IMR-90 (cell line): ENCODE measurements at regions of chr2 and their contacts with region 1.

Region 1: DNA sequence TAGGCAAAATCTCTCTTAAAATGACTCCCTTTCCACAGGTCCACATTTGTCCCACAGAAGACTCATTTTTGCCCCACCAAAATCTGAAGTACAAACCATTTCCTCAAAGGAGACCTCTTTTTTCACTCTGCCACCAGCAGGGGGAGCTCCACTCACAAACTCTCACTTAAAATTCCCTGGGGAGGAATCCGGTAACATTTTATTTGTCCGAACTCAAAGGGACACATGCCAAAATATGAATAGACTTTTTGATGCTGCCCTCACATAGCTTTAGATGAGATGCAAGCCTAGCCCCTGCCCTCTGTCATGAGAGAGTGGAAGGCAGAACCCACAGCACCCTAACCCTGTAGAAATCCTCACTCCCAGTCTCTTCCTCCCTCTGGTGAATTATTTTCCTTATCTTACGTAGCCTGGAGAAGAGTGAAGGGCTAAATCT is 57.1 kb downstream of the RMDN2 start:
- DNase-seq: peak; percentile 58
- ATAC-seq: peak; percentile 29; the same call in 1 of the 2 replicates
- H3K4me3 ChIP-seq: no peak overlapping the region
- H3K27ac ChIP-seq: no peak overlapping the region
- H3K4me1 ChIP-seq: peaks cover 3% of the 10 kb centered on the region; the same call in 1 of the 2 replicates
- H3K27me3 ChIP-seq: no peaks in the 10 kb centered on the region
- CTCF ChIP-seq: peak; percentile 72
- POLR2A ChIP-seq: no peak
- RAD21 ChIP-seq: peak; percentile 65

Region 2: DNA sequence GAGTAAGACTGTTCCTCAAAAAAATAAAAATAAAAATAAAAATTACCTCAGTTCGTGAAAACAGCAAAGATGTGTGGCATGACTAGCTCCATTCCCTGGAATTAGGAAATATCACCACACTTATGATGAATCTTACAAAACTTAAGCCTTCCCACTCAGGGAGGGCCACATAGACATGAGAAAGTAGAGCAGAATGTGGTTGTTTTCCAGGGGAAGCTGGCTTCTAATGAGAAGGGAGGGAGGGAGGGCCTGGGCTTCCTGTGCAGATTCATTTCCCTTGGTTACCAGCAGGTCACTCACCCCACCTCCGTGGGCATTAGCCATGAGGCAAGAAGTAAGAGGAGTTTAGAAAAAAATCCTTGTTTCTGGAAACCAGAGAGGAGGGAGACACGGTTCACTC is 153.0 kb before region 1 on chr2:
- CTCF ChIA-PET with region 1: no interaction called
- POLR2A ChIA-PET with region 1: no interaction called
- dilution Hi-C with region 1: no loop called
- in situ Hi-C with region 1: no loop called
- intact Hi-C with region 1: no loop called
- DNase-seq: peak; percentile 98
- ATAC-seq: peak; percentile 69
- H3K4me3 ChIP-seq: no peak overlapping the region
- H3K27ac ChIP-seq: peak overlapping the region; percentile 98
- H3K4me1 ChIP-seq: peaks cover 29% of the 10 kb centered on the region
- H3K27me3 ChIP-seq: no peaks in the 10 kb centered on the region
- CTCF ChIP-seq: no peak
- POLR2A ChIP-seq: no peak
- RAD21 ChIP-seq: no peak; the same call in 1 of the 2 replicates

Region 3: GRCh38 chr2:38045811-38046210 is 63.6 kb after region 1 on chr2:
- CTCF ChIA-PET with region 1: no interaction called
- POLR2A ChIA-PET with region 1: no interaction called
- dilution Hi-C with region 1: no loop called
- in situ Hi-C with region 1: no loop called
- intact Hi-C with region 1: no loop called
- DNase-seq: peak; percentile 16
- ATAC-seq: no peak
- H3K4me3 ChIP-seq: no peak overlapping the region
- H3K27ac ChIP-seq: no peak overlapping the region
- H3K4me1 ChIP-seq: no peaks in the 10 kb centered on the region
- H3K27me3 ChIP-seq: peaks cover 8% of the 10 kb centered on the region
- CTCF ChIP-seq: no peak
- POLR2A ChIP-seq: no peak
- RAD21 ChIP-seq: no peak

Region 4: DNA sequence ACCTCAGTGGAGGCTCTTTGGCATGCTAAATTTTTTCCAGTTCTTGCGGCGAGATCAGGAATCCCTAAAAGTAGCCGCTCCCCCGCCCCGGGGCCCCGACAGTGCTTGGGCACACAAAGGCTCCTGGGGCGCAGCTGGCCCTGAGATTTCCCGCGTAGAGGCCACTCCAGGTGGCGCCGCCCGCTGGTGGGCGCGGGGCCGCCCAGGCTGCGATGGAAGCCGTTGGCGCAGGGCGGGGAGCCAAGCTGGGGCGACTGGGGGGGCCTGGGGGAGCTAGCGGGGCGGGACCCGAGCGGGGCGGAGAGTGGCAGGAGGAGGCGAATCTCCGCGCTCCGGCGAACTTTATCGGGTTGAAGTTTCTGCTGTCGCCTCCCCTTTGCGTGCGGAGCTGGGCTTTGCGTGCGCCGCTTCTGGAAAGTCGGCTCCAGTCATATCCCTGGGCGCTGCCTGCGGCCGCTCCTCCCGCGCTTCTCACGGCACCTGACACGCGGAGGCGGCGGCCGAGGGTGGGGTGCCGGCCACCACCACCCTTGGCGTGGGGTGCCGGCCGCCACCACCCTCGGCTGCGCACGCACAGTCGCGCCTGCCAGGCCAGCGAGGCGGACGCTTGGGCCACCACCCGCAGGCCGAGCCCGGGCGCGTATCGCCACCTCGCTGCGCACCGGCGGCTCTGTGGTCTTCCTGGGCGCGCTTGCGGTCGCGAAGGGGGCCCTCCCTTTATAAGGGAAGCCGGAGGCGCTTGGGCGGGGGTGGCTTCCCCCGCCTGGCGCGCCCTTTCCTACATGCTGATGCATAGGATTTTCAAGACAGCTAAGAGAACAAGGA is 94.7 kb after region 1 on chr2:
- CTCF ChIA-PET with region 1: no interaction called
- POLR2A ChIA-PET with region 1: no interaction called
- dilution Hi-C with region 1: no loop called
- in situ Hi-C with region 1: no loop called
- intact Hi-C with region 1: loop called (anchors 2 kb)
- DNase-seq: peak; percentile 90
- ATAC-seq: peak; percentile 83
- H3K4me3 ChIP-seq: peak overlapping the region; percentile 35
- H3K27ac ChIP-seq: peak overlapping the region; percentile 57
- H3K4me1 ChIP-seq: no peaks in the 10 kb centered on the region
- H3K27me3 ChIP-seq: peaks cover 30% of the 10 kb centered on the region
- CTCF ChIP-seq: 0 out of 2 replicates have a peak, but pooled peaks have one; percentile 16
- POLR2A ChIP-seq: peak; percentile 66
- RAD21 ChIP-seq: no peak; the same call in 1 of the 2 replicates

Region 5: DNA sequence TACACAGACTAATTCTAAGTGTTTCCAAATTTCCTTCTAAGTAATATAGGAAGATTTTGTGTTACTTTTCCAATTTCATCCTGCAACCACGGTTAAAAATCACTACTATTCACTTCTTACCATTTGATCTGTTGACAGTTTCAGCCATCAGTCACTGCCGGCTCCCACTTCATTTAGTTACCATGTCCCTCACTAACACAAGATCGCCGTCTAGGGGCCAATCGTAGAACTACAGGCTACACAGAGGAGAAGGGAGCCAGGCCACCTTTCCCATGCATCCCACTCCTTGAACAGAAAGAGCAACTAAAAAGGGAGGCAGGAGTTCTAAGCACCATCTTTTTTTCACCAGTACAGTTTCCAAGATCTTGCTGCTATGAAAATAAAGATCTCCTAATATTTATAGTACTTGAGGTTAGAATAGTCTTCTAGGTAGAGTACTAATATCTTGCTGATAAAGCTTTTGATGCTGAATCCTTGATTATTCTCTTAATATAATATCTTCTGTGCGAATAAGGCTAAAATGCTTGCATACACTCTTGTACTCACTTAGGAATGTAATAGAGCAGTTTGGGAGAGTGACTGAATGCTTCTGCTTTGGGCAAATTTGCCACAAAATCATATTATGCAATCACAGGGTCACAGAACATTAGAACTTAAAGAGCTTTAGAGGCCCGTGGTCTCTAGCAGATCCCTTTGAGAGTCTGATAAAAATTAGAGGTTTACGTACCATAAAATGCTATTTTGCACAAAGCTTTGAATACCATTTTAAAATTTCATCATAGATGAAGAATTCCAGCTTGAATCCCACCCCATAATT is 133.3 kb after region 1 on chr2:
- CTCF ChIA-PET with region 1: no interaction called
- POLR2A ChIA-PET with region 1: no interaction called
- dilution Hi-C with region 1: no loop called
- in situ Hi-C with region 1: no loop called
- intact Hi-C with region 1: loop called (anchors 5 kb)
- DNase-seq: peak; percentile 51
- ATAC-seq: peak; percentile 91
- H3K4me3 ChIP-seq: no peak overlapping the region
- H3K27ac ChIP-seq: no peak overlapping the region
- H3K4me1 ChIP-seq: peaks cover 4% of the 10 kb centered on the region; the same call in 1 of the 2 replicates
- H3K27me3 ChIP-seq: peaks cover 11% of the 10 kb centered on the region; the same call in 1 of the 2 replicates
- CTCF ChIP-seq: peak; percentile 80
- POLR2A ChIP-seq: no peak
- RAD21 ChIP-seq: peak; percentile 83

Region 6: DNA sequence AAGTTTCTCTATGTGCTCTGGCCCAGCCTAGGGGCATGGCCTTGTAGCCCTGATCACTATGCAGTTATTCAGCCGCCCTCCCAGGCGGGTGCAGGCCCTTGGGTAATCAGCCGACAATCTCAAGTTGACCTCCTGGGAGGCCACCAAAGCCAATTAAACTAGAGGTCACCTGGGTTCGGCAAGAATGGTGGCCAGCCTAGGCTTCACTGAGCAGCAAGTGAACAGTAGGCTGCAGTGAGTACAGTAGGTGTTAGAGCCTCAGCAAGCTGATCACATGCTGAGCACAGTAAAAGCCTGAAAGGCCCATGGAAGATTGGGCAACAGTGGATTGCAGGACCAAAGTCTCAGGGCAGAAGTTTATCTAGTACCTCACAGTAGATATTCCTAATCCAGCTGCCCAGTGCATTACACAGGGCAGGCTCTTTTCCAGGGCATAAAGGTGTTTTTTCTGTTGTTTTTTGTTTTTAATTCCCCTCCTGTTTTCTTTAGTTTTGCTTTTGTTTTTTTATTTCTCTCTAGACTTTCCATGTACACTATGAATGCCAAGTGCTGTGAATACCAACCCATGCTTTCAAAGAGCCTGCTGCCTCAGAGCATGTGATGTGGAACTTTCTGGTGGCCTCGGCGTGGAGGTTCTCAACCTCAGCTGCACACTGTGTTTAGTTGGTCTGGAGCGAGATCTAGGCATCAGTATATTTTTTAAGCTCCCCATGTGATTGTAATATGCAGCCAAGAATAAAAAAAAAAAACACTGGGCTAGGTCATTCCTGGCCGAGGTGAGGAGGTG is 450.8 kb after region 1 on chr2:
- CTCF ChIA-PET with region 1: no interaction called
- POLR2A ChIA-PET with region 1: no interaction called
- dilution Hi-C with region 1: no loop called
- in situ Hi-C with region 1: no loop called
- intact Hi-C with region 1: no loop called
- DNase-seq: no peak
- ATAC-seq: no peak
- H3K4me3 ChIP-seq: no peak overlapping the region
- H3K27ac ChIP-seq: no peak overlapping the region
- H3K4me1 ChIP-seq: no peaks in the 10 kb centered on the region
- H3K27me3 ChIP-seq: peaks cover 45% of the 10 kb centered on the region
- CTCF ChIP-seq: no peak
- POLR2A ChIP-seq: no peak
- RAD21 ChIP-seq: no peak

Region 7: DNA sequence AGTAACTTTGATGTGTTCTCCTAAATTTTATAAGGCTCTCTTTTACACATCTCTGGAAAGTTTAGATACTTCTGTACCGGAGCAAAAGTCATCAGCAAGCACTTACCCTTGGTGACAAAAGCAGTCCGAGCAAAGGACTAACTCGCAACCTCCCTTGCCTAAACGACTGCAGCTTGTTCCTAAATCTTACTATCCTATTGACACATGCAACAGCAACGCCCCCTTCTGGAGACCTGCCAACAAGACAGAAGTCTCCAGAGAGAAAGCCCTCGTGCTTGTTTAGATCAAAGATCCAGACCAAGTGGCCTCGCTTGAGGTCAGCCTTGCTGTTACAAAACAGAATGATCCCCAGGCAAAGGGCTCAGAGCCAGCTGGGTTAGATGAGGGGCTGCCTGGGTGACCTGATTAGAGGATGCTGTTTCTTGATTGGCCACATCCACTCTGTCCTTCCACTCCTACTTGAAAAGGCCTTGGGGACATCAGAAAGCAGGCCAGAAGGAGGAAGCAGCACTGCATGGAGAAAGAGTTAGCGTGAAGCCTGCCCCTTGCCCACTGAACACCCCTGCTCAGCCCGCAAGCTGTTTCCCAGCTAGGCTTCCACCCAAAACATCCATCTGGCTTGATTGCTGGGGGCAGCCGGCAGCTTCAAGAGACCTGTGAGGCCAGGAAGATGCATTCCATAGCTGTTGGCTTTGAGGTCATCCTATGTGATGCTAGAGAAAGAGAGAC is 526.3 kb after region 1 on chr2:
- CTCF ChIA-PET with region 1: no interaction called
- POLR2A ChIA-PET with region 1: no interaction called
- dilution Hi-C with region 1: no loop called
- in situ Hi-C with region 1: no loop called
- intact Hi-C with region 1: loop called (anchors 10 kb)
- DNase-seq: peak; percentile 66
- ATAC-seq: no peak
- H3K4me3 ChIP-seq: no peak overlapping the region
- H3K27ac ChIP-seq: no peak overlapping the region
- H3K4me1 ChIP-seq: peaks cover 13% of the 10 kb centered on the region
- H3K27me3 ChIP-seq: peaks cover 7% of the 10 kb centered on the region; the same call in 1 of the 2 replicates
- CTCF ChIP-seq: peak; percentile 40
- POLR2A ChIP-seq: no peak
- RAD21 ChIP-seq: peak; percentile 43